ENCODE measurements at regions of chrX and their contacts with region 1.

Region 1: GRCh38 chrX:109714340-109714958 is 18.6 kb downstream of the ACSL4 start:
- DNase-seq: peak; percentile 18
- H3K27ac ChIP-seq: no peak overlapping the region
- CTCF ChIP-seq: no peak

Region 2: DNA sequence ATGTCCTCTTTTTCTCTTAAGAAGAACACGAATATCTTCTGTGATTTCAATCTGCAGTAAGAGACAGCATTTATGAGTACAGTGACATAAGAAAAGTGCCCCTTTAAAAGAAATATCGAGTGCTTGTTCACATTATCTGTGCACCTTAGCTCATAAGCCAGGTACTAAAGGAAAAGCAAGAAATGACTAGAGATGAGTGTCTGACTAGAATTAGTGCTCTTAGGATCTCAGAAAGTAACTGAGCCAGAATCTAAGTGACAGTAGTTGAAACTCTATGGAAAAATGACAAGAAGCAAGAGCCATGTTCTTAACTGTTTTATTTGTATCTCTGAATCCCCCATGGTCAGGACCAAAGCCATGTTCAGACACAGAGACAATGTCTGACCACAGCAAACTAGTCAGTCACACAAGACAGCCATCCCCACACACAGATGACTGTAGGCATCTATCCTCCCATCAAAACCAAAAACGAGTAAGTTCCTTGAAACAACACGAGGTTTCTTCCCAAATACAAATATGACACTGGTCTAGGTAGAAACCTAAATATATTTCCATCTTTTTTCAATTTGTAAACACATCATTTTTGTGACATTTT is 18.2 kb before region 1 on chrX:
- CTCF ChIA-PET with region 1: no interaction called
- POLR2A ChIA-PET with region 1: no interaction called
- DNase-seq: no peak
- H3K27ac ChIP-seq: no peak overlapping the region
- CTCF ChIP-seq: no peak

Region 3: GRCh38 chrX:109890895-109891502 is 176.6 kb after region 1 on chrX:
- CTCF ChIA-PET with region 1: interaction called, 11 read pairs
- POLR2A ChIA-PET with region 1: no interaction called
- DNase-seq: peak; percentile 41
- H3K27ac ChIP-seq: no peak overlapping the region
- CTCF ChIP-seq: peak; percentile 75

Measured in RWPE1 (cell line).